ENCODE measurements at regions of chr19 and their contacts with region 1.

Region 1: DNA sequence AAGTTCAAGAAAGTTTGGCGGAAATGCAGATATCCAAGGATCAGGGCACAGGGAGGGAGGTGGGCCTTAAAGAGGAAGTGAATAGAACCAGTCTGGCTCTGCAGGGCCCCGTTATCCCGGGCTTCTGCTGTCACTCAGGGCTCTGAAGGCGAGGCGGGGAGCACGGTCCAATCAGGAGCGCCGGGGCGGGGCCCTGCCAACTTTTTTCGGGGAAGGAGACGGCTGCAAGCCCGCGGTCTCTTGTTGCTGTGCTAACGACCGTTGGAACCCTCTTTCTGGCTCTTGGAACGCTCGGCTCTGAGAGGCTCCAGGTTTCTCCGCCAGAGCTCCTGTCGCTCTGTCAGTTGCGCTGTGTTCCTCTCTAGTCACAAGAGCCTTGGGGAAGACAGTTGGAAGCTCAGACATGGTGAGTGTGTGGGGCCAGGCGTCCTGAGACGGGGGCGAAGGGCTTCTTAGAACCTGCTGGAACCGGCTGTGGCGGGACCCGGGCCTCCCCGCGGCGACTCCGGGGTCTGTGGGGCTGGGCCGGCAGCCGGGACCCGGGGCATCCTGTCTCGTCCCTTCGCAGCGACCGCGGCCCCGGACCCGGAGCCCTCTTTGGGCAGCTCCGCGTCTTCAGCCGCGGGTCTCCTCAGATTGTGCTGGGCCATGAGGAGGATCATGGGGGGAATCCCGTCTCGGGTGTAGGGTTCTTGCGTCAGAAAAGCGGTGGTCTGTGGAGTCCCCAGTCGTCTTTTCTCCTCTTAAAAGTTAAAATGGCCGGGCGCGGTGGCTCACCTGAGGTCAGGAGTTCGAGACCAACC is 27.7 kb downstream of the ZNF844 start:
- DNase-seq: peak; percentile 84
- H3K4me3 Mint-ChIP-seq: peak overlapping the region; percentile 80
- H3K27ac Mint-ChIP-seq: no peak overlapping the region
- H3K4me1 Mint-ChIP-seq: peaks cover 11% of the 10 kb centered on the region
- H3K27me3 Mint-ChIP-seq: peaks cover 14% of the 10 kb centered on the region

Region 2: GRCh38 chr19:11924886-11925650 is 167.2 kb before region 1 on chr19 and contains the start of gene ZNF700:
- CTCF ChIA-PET with region 1: interaction called, 19 read pairs
- POLR2A ChIA-PET with region 1: no interaction called
- intact Hi-C with region 1: no loop called
- DNase-seq: peak; percentile 97
- H3K4me3 Mint-ChIP-seq: peak within 1 kb of the TSS; percentile 96
- H3K27ac Mint-ChIP-seq: peak within 1 kb of the TSS; percentile 99
- H3K4me1 Mint-ChIP-seq: peaks cover 35% of the 10 kb centered on the region
- H3K27me3 Mint-ChIP-seq: no peaks in the 10 kb centered on the region
- total RNA-seq, gene ZNF700: 12.9 to 13.0 TPM

Region 3: DNA sequence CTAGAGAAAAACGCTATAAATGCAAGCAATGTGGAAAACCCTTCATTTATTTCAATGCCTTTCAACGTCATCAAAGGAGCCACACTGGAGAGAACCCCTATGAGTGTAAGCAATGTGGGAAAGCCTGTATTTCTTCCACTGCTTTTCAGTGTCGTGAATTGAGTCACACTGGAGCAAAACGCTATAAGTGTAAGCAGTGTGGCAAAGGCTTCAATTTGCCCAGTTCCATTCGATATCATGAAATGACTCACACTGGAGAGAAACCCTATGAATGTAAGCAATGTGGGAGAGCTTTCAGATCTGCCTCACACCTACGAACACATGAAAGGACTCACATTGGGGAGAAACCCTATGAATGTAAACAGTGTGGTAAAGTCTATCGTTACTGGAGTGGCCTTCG is 20.4 kb after region 1 on chr19:
- CTCF ChIA-PET with region 1: interaction called, 24 read pairs
- POLR2A ChIA-PET with region 1: no interaction called
- intact Hi-C with region 1: no loop called
- DNase-seq: peak; percentile 36
- H3K4me3 Mint-ChIP-seq: no peak overlapping the region
- H3K27ac Mint-ChIP-seq: no peak overlapping the region
- H3K4me1 Mint-ChIP-seq: peaks cover 28% of the 10 kb centered on the region
- H3K27me3 Mint-ChIP-seq: peaks cover 2% of the 10 kb centered on the region

Region 4: DNA sequence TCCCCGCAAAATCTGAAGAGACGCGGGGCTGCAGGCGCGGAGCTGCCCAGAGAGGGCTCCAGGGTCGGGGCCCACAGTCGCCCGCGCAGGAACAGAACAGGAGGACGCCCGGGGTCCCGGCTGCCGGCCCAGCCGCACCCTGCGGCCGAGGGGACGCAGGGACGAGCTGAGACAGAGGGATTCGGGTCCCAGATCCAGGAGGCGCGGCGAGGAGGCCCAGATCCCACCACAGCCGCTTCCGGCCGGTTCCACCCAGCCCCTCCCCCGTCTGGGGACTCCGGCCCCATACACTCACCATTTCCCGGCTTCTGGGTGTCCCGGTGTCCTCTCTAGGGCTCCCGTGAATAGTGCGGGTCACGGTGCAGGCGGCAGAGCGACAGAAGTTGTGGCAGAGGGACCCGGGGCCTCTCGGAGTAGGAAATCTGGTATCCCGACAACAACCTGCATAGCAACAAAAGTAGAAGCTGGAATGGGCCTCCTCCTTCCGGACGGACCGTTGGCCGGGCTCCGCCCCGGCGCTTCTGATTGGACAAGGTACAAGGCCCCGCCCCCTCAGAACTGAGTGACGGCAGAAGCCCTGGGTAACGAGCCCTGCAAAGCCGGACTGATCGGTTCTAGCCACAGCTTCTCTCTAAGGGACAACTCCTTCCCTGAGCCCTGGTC is 47.8 kb after region 1 on chr19 and contains the start of gene ZNF20:
- CTCF ChIA-PET with region 1: interaction called, 106 read pairs
- POLR2A ChIA-PET with region 1: interaction called, 6 read pairs
- intact Hi-C with region 1: loop called (anchors 1 kb)
- DNase-seq: peak; percentile 95
- H3K4me3 Mint-ChIP-seq: peak within 1 kb of the TSS; percentile 93
- H3K27ac Mint-ChIP-seq: peak within 1 kb of the TSS; percentile 70
- H3K4me1 Mint-ChIP-seq: peaks cover 36% of the 10 kb centered on the region
- H3K27me3 Mint-ChIP-seq: no peaks in the 10 kb centered on the region
- total RNA-seq, gene ZNF20: 1.5 to 2.7 TPM

Region 5: GRCh38 chr19:12156223-12157058 is 64.2 kb after region 1 on chr19 and contains the start of gene ZNF625:
- CTCF ChIA-PET with region 1: interaction called, 14 read pairs
- POLR2A ChIA-PET with region 1: no interaction called
- intact Hi-C with region 1: no loop called
- DNase-seq: peak; percentile 68
- H3K4me3 Mint-ChIP-seq: peak within 1 kb of the TSS; percentile 80
- H3K27ac Mint-ChIP-seq: no peak within 1 kb of the TSS
- H3K4me1 Mint-ChIP-seq: peaks cover 4% of the 10 kb centered on the region
- H3K27me3 Mint-ChIP-seq: peaks cover 3% of the 10 kb centered on the region
- total RNA-seq, gene ZNF625: 2.5 to 3.4 TPM

Measured in activated CD4-positive, alpha-beta memory T cell treated with anti-CD3 and anti-CD28 coated beads for 36 hours (primary cell).